ENCODE measurements at regions of chr2 and their contacts with region 1.

Region 1: GRCh38 chr2:127810619-127811396 is at the start of gene WDR33:
- DNase-seq: peak; percentile 94
- H3K4me3 Mint-ChIP-seq: peak within 1 kb of the TSS; percentile 90
- H3K27ac Mint-ChIP-seq: peak within 1 kb of the TSS; percentile 96
- H3K4me1 Mint-ChIP-seq: peaks cover 33% of the 10 kb centered on the region
- H3K27me3 Mint-ChIP-seq: peaks cover 6% of the 10 kb centered on the region
- total RNA-seq, gene WDR33: 74.2 and 76.5 TPM in 2 replicates

Region 2: DNA sequence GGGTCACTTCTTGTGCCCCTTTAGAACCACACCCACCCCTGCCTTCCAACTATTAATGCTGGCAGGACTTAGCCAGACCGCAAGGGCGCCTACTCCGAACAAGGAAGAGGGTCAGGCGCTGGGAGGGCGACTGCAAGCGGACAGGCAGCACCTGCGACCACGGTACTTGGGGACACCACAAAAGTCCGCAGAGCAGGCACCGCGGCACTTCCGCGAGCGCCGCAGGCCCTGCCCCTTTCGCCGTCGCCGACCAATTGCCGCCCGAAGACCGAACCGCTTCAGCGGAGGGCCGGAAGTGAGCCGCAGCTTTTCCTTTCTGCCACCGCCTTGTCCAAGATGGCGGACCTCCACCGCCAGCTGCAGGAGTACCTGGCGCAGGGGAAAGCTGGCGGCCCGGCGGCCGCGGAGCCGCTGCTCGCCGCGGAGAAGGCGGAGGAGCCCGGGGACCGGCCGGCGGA is 109.6 kb before region 1 on chr2 and contains the start of gene SFT2D3:
- intact Hi-C with region 1: loop called (anchors 1 kb)
- DNase-seq: peak; percentile 93
- H3K4me3 Mint-ChIP-seq: peak within 1 kb of the TSS; percentile 89
- H3K27ac Mint-ChIP-seq: peak within 1 kb of the TSS; percentile 95
- H3K4me1 Mint-ChIP-seq: peaks cover 29% of the 10 kb centered on the region
- H3K27me3 Mint-ChIP-seq: no peaks in the 10 kb centered on the region
- total RNA-seq, gene SFT2D3: 4.5 and 5.9 TPM in 2 replicates

Region 3: DNA sequence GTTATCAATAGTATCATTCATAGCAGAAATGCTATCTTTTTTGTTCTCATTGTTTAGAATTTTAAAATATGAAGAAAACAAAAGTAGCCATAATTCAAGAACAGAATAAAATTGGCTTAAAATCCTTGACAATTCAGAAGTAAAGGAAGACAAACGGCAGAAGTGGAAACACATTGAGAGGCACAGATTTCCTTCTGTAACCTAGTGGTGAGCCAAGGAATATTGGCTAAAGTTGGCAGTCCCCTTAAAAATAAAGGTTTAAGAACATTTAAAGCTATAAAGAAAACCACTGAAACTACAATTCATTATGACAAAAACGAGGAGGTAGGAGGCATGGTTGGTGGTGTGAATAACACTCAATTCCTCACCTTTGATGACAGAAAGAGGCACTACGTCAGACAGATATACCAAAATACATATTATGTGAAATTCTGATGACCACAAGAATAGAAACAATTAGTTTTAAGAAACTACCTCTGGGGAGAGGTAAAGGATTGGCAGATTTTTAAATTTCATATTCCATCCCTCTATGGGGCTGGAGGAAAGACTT is 67.3 kb before region 1 on chr2:
- intact Hi-C with region 1: loop called (anchors 5 kb)
- DNase-seq: no peak
- H3K4me3 Mint-ChIP-seq: no peak overlapping the region
- H3K27ac Mint-ChIP-seq: no peak overlapping the region
- H3K4me1 Mint-ChIP-seq: peaks cover 36% of the 10 kb centered on the region
- H3K27me3 Mint-ChIP-seq: no peaks in the 10 kb centered on the region

Region 4: DNA sequence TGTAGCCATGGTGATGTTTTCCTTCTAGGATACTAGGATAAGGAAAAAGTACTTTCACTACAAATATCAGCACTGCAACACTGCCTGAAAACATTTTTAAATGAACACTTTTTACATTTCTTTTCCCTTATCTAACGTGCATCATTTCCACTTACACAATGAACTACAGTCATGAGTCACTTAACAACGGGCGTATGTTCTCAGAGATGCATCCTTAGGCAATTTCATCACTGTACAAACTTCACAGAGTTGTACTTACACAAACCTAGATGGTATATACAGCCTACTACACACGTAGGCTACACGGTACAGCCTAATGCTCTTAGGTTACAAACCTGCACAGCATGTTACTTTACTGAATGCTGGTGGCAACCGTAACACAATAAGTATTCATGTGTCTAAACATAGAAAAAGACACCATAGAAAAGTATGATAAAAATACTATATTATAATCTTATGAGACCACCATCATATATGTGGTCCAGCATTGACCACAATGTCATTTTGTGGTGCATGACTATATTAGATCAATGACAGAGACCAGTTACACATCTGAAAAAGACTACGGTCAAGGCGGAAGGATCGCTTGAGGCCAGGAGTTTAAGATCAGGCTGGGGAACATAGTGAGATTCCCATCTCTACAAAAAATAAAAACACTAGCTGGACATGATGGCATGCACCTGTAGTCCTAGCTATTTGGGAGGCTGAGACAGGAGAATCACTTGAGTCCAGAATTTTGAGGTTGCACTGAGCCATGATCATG is 39.7 kb before region 1 on chr2:
- intact Hi-C with region 1: loop called (anchors 5 kb)
- DNase-seq: no peak
- H3K4me3 Mint-ChIP-seq: no peak overlapping the region
- H3K27ac Mint-ChIP-seq: no peak overlapping the region
- H3K4me1 Mint-ChIP-seq: peaks cover 18% of the 10 kb centered on the region
- H3K27me3 Mint-ChIP-seq: no peaks in the 10 kb centered on the region

Region 5: GRCh38 chr2:127829845-127830246 is 19.0 kb after region 1 on chr2:
- intact Hi-C with region 1: loop called (anchors 1 kb)
- DNase-seq: peak; percentile 59
- H3K4me3 Mint-ChIP-seq: peak overlapping the region; percentile 18
- H3K27ac Mint-ChIP-seq: peak overlapping the region; percentile 82
- H3K4me1 Mint-ChIP-seq: peaks cover 20% of the 10 kb centered on the region
- H3K27me3 Mint-ChIP-seq: no peaks in the 10 kb centered on the region

Region 6: DNA sequence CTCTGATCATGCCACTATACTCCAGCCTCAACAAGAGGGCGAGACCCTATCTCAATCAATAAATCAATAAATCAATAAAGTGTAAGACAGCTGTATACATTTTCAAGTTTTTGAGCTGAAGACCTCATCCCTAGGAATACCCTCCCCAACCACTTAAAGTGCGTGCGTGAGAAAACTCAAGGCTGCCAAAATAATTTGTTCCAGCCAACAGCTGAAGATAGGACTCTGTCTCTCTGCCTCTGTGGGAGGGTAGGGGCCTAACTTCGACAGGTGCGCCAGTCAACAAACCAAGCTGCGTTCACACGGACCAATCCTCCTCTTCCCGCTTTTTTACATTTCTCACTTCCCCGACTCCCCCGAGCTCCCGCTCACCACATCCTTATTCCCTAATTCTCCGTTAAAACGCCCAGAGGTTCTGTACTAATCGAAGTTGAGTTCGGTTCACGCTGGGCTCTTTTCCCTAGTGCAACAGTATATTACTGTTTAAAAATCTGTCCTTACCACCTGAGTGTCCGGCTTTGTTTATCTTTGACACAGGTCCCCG is 46.5 kb after region 1 on chr2:
- intact Hi-C with region 1: loop called (anchors 1 kb)
- DNase-seq: peak; percentile 13
- H3K4me3 Mint-ChIP-seq: peak overlapping the region; percentile 100
- H3K27ac Mint-ChIP-seq: peak overlapping the region; percentile 91
- H3K4me1 Mint-ChIP-seq: peaks cover 26% of the 10 kb centered on the region
- H3K27me3 Mint-ChIP-seq: no peaks in the 10 kb centered on the region

Region 7: DNA sequence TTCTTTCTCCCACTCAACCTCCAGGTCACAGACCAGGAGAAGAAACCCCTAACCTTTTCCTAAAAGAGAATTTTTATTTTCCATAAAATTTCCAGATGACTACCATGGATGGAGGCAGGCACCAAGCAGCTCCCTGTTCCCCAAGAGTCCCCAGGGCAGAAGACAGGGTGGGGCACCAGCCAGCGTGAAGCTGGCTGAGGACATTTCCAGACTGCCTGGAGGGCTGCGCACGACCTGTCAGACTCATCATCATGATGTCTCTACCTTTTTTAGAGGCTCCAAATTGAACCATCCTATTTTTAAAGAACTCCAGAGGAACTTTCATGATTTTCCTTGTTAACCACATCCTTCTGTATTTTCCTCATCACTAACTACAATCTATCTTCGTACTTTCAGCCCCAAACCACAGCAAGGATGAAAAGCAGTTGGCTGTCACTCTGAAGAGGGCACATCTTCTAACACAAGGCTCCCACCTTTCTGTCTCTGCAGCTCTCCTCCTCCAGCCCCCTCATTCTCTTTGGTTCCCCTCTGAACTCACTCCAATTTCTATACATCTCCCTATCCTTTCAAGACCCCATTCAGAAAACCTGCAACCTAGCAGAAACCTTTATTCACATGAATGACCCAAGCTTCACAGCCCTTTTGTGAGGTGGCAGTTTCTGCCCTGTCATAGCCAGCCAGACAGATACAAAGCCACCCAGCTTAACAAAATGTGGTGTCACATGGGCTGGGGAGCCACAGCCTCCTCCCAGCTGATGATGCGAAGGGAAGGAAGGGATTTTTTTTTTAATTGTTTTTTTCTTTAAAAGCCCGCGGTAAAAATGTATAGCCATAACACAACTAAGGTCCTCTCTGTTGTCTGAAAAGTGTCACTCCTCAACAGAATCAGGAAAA is 63.8 kb after region 1 on chr2:
- intact Hi-C with region 1: no loop called
- DNase-seq: no peak
- H3K4me3 Mint-ChIP-seq: peak overlapping the region; percentile 9
- H3K27ac Mint-ChIP-seq: peak overlapping the region; percentile 79
- H3K4me1 Mint-ChIP-seq: peaks cover 24% of the 10 kb centered on the region
- H3K27me3 Mint-ChIP-seq: no peaks in the 10 kb centered on the region

Region 8: GRCh38 chr2:128027801-128028667 is 217.2 kb after region 1 on chr2 and contains the start of gene SAP130:
- intact Hi-C with region 1: loop called (anchors 10 kb)
- DNase-seq: peak; percentile 98
- H3K4me3 Mint-ChIP-seq: peak within 1 kb of the TSS; percentile 97
- H3K27ac Mint-ChIP-seq: peak within 1 kb of the TSS; percentile 85
- H3K4me1 Mint-ChIP-seq: peaks cover 12% of the 10 kb centered on the region
- H3K27me3 Mint-ChIP-seq: peaks cover 2% of the 10 kb centered on the region
- total RNA-seq, gene SAP130: 33.1 and 36.5 TPM in 2 replicates